Activated CD8-positive, alpha-beta T cell treated with anti-CD3 and anti-CD28 coated beads, Interleukin-2, amount 10 ng/mL, durations not matched to agents 7 days and 5 days (primary cell): ENCODE measurements at regions of chr7 and their contacts with region 1.

Region 1: DNA sequence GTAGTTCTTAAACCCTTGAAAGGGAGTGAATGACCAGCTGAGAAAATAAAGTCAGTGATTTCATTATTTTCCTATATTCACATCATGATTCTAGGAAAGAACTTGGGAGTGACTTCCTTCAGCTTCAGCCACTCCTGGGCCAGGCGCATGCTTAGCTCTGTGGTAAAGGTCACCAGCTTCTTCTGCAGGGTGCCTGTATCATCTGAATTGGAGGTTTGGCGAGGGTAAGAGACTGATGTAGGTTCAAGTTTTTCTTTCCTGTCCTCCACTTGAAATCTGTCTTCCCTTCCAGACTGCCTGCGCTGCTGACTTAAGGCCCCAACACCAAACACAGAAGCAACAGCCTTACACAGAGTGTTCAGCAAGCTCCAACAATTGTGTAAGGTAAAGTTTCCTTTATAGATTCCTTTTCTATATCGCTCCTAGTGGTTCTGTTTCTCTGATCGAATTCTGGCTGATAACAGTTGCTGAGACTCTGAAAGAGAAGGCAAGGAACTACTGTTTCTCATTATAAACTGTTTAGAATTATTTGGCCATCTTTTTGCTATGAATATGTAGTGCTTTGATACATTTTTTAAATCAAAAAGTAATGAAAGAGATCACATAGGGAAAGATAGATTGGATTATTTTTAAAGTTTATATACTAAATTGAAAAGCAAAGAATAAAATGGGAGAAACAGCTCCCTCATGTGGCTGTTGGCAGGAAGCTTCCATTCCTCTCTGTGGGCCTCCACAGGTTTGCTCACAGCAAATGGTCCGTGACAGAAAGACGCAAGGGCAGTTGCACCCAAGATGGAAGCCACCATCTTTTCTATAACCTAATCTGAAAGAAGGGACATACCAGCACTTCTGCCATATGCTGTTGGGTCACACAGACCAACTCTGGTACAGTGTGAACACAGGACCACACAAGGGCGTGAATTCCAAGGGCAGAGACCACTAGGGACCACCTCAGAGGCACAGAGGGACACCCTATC is 14.0 kb downstream of the GATAD1 start:
- DNase-seq: peak; percentile 51
- ATAC-seq: peak; percentile 76
- H3K4me3 Mint-ChIP-seq: no peak overlapping the region
- H3K27ac Mint-ChIP-seq: no peak overlapping the region
- H3K4me1 Mint-ChIP-seq: no peaks in the 10 kb centered on the region
- H3K27me3 Mint-ChIP-seq: no peaks in the 10 kb centered on the region

Region 2: DNA sequence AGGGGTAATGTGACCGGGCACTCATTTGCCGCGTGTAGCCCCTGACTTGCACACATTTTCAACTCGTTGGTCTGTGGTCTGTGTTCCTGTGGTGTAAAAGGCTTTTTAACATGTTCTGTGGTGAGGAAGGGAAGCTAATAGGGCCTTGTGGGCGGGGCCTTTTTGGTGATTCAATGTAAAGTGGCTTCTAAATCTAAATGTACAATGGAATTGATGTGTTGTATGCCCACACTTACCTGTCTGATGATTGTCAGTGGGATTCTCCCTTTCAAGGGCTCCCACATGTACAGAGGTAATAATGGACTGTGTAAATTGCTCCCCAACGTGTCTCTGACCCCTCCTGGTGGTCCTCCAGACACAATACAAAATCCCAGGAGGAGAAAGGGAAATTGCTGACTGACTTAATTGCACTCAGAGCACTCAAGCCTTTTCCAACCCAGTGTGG is 57.1 kb before region 1 on chr7:
- CTCF ChIA-PET with region 1: no interaction called
- POLR2A ChIA-PET with region 1: no interaction called
- DNase-seq: peak; percentile 83
- ATAC-seq: peak; percentile 90
- H3K4me3 Mint-ChIP-seq: peak overlapping the region; percentile 26
- H3K27ac Mint-ChIP-seq: peak overlapping the region; percentile 60
- H3K4me1 Mint-ChIP-seq: peaks cover 25% of the 10 kb centered on the region
- H3K27me3 Mint-ChIP-seq: no peaks in the 10 kb centered on the region

Region 3: DNA sequence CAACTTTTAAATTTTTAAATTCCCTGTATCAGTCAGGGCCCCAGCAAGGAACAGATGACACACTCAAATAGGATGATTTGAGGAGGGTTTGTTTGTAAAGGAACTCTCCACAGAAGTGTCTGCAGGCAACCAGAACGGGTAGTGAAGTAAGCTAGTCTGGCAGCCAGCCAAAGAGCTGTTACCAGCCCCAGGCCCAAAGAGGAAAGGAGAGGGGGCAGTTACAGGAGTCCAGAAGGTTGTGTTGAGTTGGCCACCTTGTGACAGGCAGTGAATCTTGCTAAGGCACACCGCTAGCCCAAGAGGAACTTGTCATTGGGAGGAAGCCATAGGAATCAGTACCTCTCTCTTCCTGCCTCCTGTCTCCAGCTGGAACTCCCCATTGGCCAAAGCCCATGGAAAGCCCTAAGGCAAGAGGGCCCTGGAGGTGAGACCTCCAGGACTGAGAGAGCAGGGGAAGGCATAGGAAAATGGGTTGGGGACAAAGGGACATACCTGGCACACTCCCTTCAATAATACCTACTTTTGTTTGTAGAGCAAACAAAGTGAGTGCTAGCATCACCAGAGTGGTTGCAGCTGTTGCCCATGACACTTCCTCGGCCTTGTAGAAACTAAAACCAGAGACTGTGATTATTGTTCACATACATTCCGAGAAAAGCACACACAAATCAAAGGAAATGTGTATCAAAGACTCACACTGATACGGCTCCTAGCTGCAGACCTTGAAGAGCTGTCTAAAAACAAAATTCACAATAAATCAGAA is 39.5 kb before region 1 on chr7:
- CTCF ChIA-PET with region 1: interaction called, 12 read pairs
- POLR2A ChIA-PET with region 1: no interaction called
- DNase-seq: no peak
- ATAC-seq: no peak
- H3K4me3 Mint-ChIP-seq: no peak overlapping the region
- H3K27ac Mint-ChIP-seq: no peak overlapping the region
- H3K4me1 Mint-ChIP-seq: peaks cover 17% of the 10 kb centered on the region
- H3K27me3 Mint-ChIP-seq: peaks cover 15% of the 10 kb centered on the region

Region 4: GRCh38 chr7:92520024-92520423 is 58.7 kb after region 1 on chr7:
- CTCF ChIA-PET with region 1: no interaction called
- POLR2A ChIA-PET with region 1: no interaction called
- DNase-seq: no peak
- ATAC-seq: no peak
- H3K4me3 Mint-ChIP-seq: no peak overlapping the region
- H3K27ac Mint-ChIP-seq: no peak overlapping the region
- H3K4me1 Mint-ChIP-seq: no peaks in the 10 kb centered on the region
- H3K27me3 Mint-ChIP-seq: no peaks in the 10 kb centered on the region